Endothelial cell of umbilical vein (primary cell): ENCODE measurements at regions of chr14 and their contacts with region 1.

Region 1: DNA sequence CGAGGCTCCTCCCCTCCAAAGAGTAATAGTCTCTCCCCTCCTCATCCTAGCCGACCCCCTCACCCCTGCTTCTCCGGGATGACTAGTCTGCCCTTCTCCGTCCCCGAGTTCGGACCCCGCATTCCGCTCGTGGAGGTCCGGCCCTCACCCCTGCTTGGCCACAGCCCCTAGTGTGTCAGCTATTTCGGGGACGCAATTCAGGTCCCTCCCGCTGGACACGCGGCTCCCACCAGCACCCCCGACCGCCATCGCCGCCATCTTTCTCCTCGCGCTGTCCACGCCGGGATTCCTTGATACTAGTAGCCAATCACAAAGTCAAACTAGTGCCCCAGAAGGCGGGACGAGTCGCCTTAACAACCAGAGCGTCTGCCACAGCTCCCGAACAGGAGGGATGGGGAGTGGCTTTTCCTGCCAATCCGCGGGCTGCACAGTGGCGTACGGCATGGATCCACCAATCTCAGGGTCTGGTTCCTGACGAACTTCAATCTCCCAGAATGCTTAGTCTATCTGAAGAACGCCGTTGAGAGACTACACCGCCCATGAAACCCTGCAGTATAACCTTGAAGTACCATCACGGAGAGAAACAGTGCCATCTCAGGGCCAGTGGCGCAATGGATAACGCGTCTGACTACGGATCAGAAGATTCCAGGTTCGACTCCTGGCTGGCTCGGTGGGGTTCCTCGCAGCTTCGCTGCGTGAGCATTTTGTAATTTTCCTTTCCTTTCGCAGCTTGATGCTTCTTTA is at the start of gene PRMT5:
- DNase-seq: peak; percentile 100
- H3K4me3 ChIP-seq: peak within 1 kb of the TSS; percentile 66 to 95 (median 81)
- H3K27ac ChIP-seq: peak within 1 kb of the TSS; percentile 68
- H3K4me1 ChIP-seq: peaks cover 16% of the 10 kb centered on the region
- H3K27me3 ChIP-seq: no peaks in the 10 kb centered on the region
- CTCF ChIP-seq: no peak
- POLR2A ChIP-seq: peak; percentile 64
- total RNA-seq, gene PRMT5: 67.2 and 73.1 TPM in 2 replicates

Region 2: DNA sequence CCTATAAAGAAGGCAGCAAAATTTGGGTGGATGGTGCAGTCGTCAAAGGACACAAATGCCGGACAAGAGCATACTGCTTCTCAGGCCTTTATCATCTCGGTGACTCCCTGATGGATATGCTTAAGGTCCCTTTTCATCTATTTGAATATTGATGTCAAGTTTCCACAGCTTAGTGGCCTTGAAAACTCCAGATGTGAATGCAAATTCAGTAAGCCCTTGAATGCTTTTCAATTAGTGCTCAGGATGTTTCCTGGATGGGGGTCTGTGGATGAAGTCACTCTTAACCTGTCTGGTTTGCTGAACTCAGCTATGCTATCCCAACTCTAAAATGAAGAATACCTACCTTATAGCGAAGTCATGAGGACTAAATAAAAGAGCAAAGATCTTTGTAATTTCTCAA is 35.6 kb before region 1 on chr14:
- CTCF ChIA-PET with region 1: no interaction called
- POLR2A ChIA-PET with region 1: no interaction called
- dilution Hi-C with region 1: no loop called
- intact Hi-C with region 1: no loop called
- DNase-seq: no peak
- H3K4me3 ChIP-seq: no peak overlapping the region
- H3K27ac ChIP-seq: no peak overlapping the region
- H3K4me1 ChIP-seq: no peaks in the 10 kb centered on the region
- H3K27me3 ChIP-seq: no peaks in the 10 kb centered on the region
- CTCF ChIP-seq: no peak
- POLR2A ChIP-seq: no peak

Region 3: GRCh38 chr14:22918804-22919600 is 10.3 kb before region 1 on chr14 and contains the start of gene RBM23:
- CTCF ChIA-PET with region 1: interaction called, 21 read pairs
- POLR2A ChIA-PET with region 1: interaction called, 12 read pairs
- dilution Hi-C with region 1: no loop called
- intact Hi-C with region 1: loop called (anchors 1 kb)
- DNase-seq: peak; percentile 100
- H3K4me3 ChIP-seq: peak within 1 kb of the TSS; percentile 70 to 90 (median 84)
- H3K27ac ChIP-seq: peak within 1 kb of the TSS; percentile 96
- H3K4me1 ChIP-seq: peaks cover 12% of the 10 kb centered on the region
- H3K27me3 ChIP-seq: no peaks in the 10 kb centered on the region
- CTCF ChIP-seq: no peak
- POLR2A ChIP-seq: peak; percentile 67
- total RNA-seq, gene RBM23: 61.0 and 68.9 TPM in 2 replicates

Region 4: DNA sequence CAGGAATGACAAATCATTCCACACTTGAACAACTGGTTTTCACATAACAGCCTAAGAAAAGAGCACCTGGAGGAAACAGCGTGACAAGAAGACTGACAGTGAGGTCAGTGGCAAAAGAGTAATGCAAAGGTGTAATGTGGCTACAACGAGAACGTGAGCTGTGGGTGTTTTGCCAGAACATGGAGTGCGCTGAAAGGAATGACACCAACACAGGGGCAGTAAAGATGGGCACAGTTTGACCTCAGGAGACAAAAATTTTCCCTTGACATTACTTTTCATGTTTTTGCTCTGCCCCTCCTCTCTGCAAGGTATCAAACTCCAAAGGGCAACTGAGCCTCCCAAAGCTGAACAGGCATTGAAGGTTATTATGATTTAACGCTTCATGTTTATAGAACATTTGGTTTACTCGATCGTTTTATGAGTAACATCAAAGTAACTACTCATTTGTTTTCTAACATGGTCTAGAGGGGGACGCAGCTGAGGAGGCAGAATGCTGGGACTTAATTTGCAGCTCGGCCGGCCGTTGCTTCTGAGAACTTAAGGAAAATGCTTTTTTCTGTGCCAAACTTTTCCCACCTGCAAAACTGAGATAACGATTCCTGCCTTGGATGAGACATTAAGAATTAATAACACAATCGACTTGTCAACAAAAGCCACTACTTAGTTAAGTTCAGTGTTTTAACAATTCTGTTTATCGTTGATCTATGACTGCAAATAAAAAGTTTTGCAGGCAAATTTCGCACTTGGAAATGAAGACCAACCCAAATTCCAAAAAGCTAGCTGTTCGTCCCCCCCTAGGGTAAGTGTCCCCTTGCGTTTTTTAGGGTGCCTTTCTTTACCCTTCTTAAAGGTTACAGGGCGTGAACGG is 26.7 kb after region 1 on chr14:
- CTCF ChIA-PET with region 1: interaction called, 23 read pairs
- POLR2A ChIA-PET with region 1: interaction called, 5 read pairs
- dilution Hi-C with region 1: no loop called
- intact Hi-C with region 1: loop called (anchors 1 kb)
- DNase-seq: peak; percentile 53
- H3K4me3 ChIP-seq: peak overlapping the region; percentile 52 to 96 (median 94)
- H3K27ac ChIP-seq: peak overlapping the region; percentile 82
- H3K4me1 ChIP-seq: peaks cover 10% of the 10 kb centered on the region
- H3K27me3 ChIP-seq: no peaks in the 10 kb centered on the region
- CTCF ChIP-seq: no peak
- POLR2A ChIP-seq: no peak

Region 5: DNA sequence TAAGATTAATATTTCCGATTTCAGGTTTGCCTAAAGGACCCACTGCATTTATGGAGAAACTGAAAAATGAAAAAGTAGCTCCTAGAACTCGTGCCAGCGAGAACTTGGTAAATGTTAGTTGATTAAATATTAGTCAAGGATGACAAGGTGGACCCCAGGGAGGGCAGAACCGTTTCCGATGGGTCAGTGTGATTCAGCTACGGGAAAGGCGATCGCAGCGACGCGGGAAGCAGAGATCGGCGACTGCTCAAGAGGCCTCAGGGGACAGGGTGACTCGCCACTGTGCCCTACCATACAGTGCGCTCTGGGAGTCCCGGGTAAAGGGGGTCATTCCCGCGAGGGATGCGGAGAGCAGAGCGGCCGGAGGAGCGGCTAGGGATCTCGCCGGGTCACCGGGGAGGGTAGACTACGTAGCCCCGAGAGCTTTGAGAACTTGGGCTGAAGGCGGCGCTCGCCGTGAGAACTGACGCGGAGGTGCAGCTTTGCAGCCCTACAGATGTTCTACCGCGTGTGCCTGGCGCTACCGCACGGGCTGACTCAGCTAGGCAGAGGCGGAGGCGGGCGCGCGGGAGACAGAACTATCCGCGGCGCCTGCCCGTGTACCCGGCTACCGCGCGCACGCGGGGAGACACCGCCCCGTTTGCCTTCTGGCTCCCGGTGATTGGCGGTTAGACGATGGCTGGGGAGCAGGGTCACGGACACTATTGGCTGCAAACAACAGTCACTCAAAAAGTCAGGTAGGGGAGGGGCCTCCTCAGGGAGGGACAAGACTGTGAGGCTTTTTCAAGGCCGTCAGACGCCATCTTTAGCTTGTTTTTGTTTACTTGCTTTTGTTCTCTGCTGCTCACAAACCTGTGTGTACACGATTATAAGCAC is 77.5 kb after region 1 on chr14:
- CTCF ChIA-PET with region 1: no interaction called
- POLR2A ChIA-PET with region 1: no interaction called
- dilution Hi-C with region 1: no loop called
- intact Hi-C with region 1: loop called (anchors 1 kb)
- DNase-seq: peak; percentile 99
- H3K4me3 ChIP-seq: peak overlapping the region; percentile 38 to 78 (median 56)
- H3K27ac ChIP-seq: peak overlapping the region; percentile 89
- H3K4me1 ChIP-seq: peaks cover 29% of the 10 kb centered on the region
- H3K27me3 ChIP-seq: no peaks in the 10 kb centered on the region
- CTCF ChIP-seq: peak; percentile 7 to 34
- POLR2A ChIP-seq: peak; percentile 97